MCF 10A (cell line): ENCODE measurements at regions of chr5 and their contacts with region 1.

Region 1: GRCh38 chr5:172188033-172188892 is at the start of gene STK10:
- DNase-seq: peak; percentile 95
- H3K4me3 Mint-ChIP-seq: peak within 1 kb of the TSS; percentile 87
- H3K27ac Mint-ChIP-seq: peak within 1 kb of the TSS; percentile 43
- H3K4me1 Mint-ChIP-seq: peaks cover 24% of the 10 kb centered on the region
- H3K27me3 Mint-ChIP-seq: no peaks in the 10 kb centered on the region
- CTCF ChIP-seq: peak; percentile 98
- total RNA-seq, gene STK10: 46.5 and 49.9 TPM in 2 replicates

Region 2: GRCh38 chr5:171418316-171418981 is 769.8 kb before region 1 on chr5:
- CTCF ChIA-PET with region 1: no interaction called
- POLR2A ChIA-PET with region 1: no interaction called
- intact Hi-C with region 1: loop called (anchors 2 kb)
- DNase-seq: peak; percentile 87
- H3K4me3 Mint-ChIP-seq: peak overlapping the region; percentile 68
- H3K27ac Mint-ChIP-seq: no peak overlapping the region
- H3K4me1 Mint-ChIP-seq: peaks cover 34% of the 10 kb centered on the region
- H3K27me3 Mint-ChIP-seq: no peaks in the 10 kb centered on the region
- CTCF ChIP-seq: peak; percentile 99

Region 3: GRCh38 chr5:172044631-172045314 is 143.5 kb before region 1 on chr5:
- CTCF ChIA-PET with region 1: no interaction called
- POLR2A ChIA-PET with region 1: no interaction called
- intact Hi-C with region 1: loop called (anchors 5 kb)
- DNase-seq: no peak
- H3K4me3 Mint-ChIP-seq: no peak overlapping the region
- H3K27ac Mint-ChIP-seq: peak overlapping the region; percentile 52
- H3K4me1 Mint-ChIP-seq: peaks cover 6% of the 10 kb centered on the region
- H3K27me3 Mint-ChIP-seq: no peaks in the 10 kb centered on the region
- CTCF ChIP-seq: no peak

Region 4: GRCh38 chr5:172065501-172065990 is 122.7 kb before region 1 on chr5:
- CTCF ChIA-PET with region 1: interaction called, 10 read pairs
- POLR2A ChIA-PET with region 1: no interaction called
- intact Hi-C with region 1: loop called (anchors 5 kb)
- DNase-seq: peak; percentile 47
- H3K4me3 Mint-ChIP-seq: no peak overlapping the region
- H3K27ac Mint-ChIP-seq: peak overlapping the region; percentile 69
- H3K4me1 Mint-ChIP-seq: no peaks in the 10 kb centered on the region
- H3K27me3 Mint-ChIP-seq: no peaks in the 10 kb centered on the region
- CTCF ChIP-seq: no peak

Region 5: GRCh38 chr5:172199446-172199845 is 11.2 kb after region 1 on chr5:
- CTCF ChIA-PET with region 1: interaction called, 48 read pairs
- POLR2A ChIA-PET with region 1: interaction called, 4 read pairs
- intact Hi-C with region 1: no loop called
- DNase-seq: no peak
- H3K4me3 Mint-ChIP-seq: no peak overlapping the region
- H3K27ac Mint-ChIP-seq: no peak overlapping the region
- H3K4me1 Mint-ChIP-seq: no peaks in the 10 kb centered on the region
- H3K27me3 Mint-ChIP-seq: no peaks in the 10 kb centered on the region
- CTCF ChIP-seq: no peak

Region 6: GRCh38 chr5:172283020-172283861 is 95.0 kb after region 1 on chr5 and contains the start of gene UBTD2:
- CTCF ChIA-PET with region 1: interaction called, 24 read pairs
- POLR2A ChIA-PET with region 1: interaction called, 35 read pairs
- intact Hi-C with region 1: loop called (anchors 2 kb)
- DNase-seq: peak; percentile 88
- H3K4me3 Mint-ChIP-seq: peak within 1 kb of the TSS; percentile 95
- H3K27ac Mint-ChIP-seq: peak within 1 kb of the TSS; percentile 97
- H3K4me1 Mint-ChIP-seq: peaks cover 29% of the 10 kb centered on the region
- H3K27me3 Mint-ChIP-seq: no peaks in the 10 kb centered on the region
- CTCF ChIP-seq: peak; percentile 76
- total RNA-seq, gene UBTD2: 23.3 and 24.1 TPM in 2 replicates